ENCODE measurements at regions of chr11 and their contacts with region 1.

Region 1: DNA sequence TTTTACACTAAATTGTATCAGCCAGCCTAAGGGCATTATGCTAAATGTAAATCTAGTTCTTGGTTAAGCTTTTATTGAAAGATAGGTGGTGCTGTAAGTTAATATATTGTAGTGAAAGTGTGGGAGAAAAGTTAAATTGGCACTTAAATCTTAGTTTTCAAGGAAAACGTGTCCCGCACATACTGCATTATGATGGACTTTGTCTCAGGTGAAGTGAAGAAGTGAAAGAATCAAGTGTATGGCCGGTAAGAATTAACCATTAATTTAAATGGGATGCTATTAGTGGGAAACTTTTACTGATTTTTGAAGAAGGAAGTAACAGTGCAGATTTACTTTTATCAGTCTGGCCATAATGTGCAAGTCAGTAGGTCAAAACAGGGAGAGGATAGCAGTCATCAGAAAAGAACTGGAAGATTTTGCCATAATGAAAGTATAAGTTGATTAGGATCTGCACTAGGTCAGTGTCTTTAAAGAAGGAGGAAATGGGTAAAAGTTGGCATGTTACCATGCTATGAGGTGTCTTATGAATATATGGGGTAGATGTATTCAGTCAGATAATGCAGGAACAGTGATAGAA is 81.6 kb downstream of the PDHX start:
- DNase-seq: no peak
- ATAC-seq: peak; percentile 64
- H3K4me3 Mint-ChIP-seq: peak overlapping the region; percentile 52
- H3K27ac Mint-ChIP-seq: peak overlapping the region; percentile 77
- H3K4me1 Mint-ChIP-seq: peaks cover 31% of the 10 kb centered on the region
- H3K27me3 Mint-ChIP-seq: no peaks in the 10 kb centered on the region
- CTCF ChIP-seq: peak; percentile 58

Region 2: GRCh38 chr11:34926101-34926830 is 71.8 kb before region 1 on chr11:
- CTCF ChIA-PET with region 1: interaction called, 4 read pairs
- POLR2A ChIA-PET with region 1: no interaction called
- intact Hi-C with region 1: loop called (anchors 2 kb)
- DNase-seq: no peak
- ATAC-seq: peak; percentile 50
- H3K4me3 Mint-ChIP-seq: no peak overlapping the region
- H3K27ac Mint-ChIP-seq: no peak overlapping the region
- H3K4me1 Mint-ChIP-seq: peaks cover 8% of the 10 kb centered on the region
- H3K27me3 Mint-ChIP-seq: no peaks in the 10 kb centered on the region
- CTCF ChIP-seq: peak; percentile 63

Region 3: GRCh38 chr11:35040221-35040942 is 42.3 kb after region 1 on chr11:
- CTCF ChIA-PET with region 1: interaction called, 8 read pairs
- POLR2A ChIA-PET with region 1: interaction called, 4 read pairs
- intact Hi-C with region 1: loop called (anchors 1 kb)
- DNase-seq: no peak
- ATAC-seq: peak; percentile 66
- H3K4me3 Mint-ChIP-seq: peak overlapping the region; percentile 77
- H3K27ac Mint-ChIP-seq: peak overlapping the region; percentile 94
- H3K4me1 Mint-ChIP-seq: peaks cover 75% of the 10 kb centered on the region
- H3K27me3 Mint-ChIP-seq: no peaks in the 10 kb centered on the region
- CTCF ChIP-seq: no peak

Region 4: DNA sequence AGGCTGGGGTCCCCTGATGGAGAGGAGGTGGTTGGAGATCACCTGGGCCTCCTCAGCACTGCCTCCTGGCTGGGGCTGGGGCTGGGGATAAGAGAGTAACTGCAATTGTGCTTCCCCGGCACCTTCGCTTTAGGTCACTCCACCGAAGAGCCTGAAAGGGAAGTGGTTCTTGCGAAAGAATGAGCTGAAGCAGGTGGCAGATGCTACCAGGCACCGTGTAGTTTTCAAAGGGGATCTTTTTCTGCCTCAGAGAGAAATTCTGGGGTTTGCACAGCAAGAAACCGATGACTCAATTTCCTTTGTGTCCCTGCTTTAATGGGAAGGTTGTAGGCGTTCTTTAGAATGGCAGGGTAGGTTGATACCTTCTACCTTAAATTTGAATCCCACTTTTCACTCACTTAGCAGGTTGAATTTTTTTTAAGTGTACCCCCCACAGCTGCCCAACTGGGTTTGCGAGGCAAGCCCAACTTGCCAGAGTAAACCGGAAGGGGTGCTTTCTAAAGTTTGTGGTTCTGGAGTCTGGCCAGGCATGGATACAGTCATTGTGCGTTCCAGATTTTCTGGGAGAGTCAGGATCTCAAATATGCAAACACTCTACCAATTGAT is 146.2 kb after region 1 on chr11:
- CTCF ChIA-PET with region 1: interaction called, 18 read pairs
- POLR2A ChIA-PET with region 1: interaction called, 54 read pairs
- intact Hi-C with region 1: loop called (anchors 1 kb)
- DNase-seq: peak; percentile 63
- ATAC-seq: peak; percentile 62
- H3K4me3 Mint-ChIP-seq: peak overlapping the region; percentile 97
- H3K27ac Mint-ChIP-seq: peak overlapping the region; percentile 90
- H3K4me1 Mint-ChIP-seq: peaks cover 81% of the 10 kb centered on the region
- H3K27me3 Mint-ChIP-seq: no peaks in the 10 kb centered on the region
- CTCF ChIP-seq: no peak

Region 5: GRCh38 chr11:35237860-35238715 is 240.0 kb after region 1 on chr11:
- CTCF ChIA-PET with region 1: interaction called, 22 read pairs
- POLR2A ChIA-PET with region 1: no interaction called
- intact Hi-C with region 1: loop called (anchors 1 kb)
- DNase-seq: no peak
- ATAC-seq: peak; percentile 51
- H3K4me3 Mint-ChIP-seq: no peak overlapping the region
- H3K27ac Mint-ChIP-seq: no peak overlapping the region
- H3K4me1 Mint-ChIP-seq: peaks cover 30% of the 10 kb centered on the region
- H3K27me3 Mint-ChIP-seq: no peaks in the 10 kb centered on the region
- CTCF ChIP-seq: no peak

Region 6: DNA sequence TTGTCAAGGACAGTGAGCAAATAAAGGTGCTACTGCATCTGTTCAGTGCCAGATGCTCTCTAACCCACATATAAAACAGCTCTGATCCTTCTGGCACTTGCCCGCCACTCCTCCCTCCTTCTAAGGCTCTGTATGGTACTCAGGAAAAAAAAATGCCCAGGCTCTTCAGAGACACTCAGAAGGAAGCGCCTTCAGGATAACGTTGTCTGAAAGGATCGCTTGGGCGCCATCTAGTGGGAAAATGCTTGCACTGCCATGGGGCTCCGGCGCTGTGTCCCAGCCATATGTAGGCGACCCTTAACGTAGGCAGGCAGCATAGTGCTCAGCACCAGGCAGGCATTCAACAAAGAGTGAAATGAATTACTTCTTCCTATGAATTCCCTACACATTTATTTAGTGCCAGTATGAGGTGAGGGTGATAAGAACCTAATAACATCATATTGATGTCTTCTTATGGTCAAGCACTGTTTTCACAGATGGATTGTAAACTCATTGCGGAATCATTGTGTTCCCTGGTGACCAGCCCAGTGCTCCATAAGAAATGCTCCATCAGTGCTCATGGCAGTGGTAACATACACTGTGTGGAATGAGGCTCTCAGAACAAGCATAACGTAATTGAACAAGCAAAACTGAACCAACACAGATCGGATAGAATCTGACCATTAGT is 487.7 kb after region 1 on chr11:
- CTCF ChIA-PET with region 1: no interaction called
- POLR2A ChIA-PET with region 1: no interaction called
- intact Hi-C with region 1: loop called (anchors 5 kb)
- DNase-seq: peak; percentile 59
- ATAC-seq: peak; percentile 73
- H3K4me3 Mint-ChIP-seq: no peak overlapping the region
- H3K27ac Mint-ChIP-seq: no peak overlapping the region
- H3K4me1 Mint-ChIP-seq: no peaks in the 10 kb centered on the region
- H3K27me3 Mint-ChIP-seq: peaks cover 22% of the 10 kb centered on the region
- CTCF ChIP-seq: peak; percentile 60

Measured in activated B cell treated with CpG ODN at 0.5 μM for 24 hours (primary cell).